ENCODE measurements at regions of chr17 and their contacts with region 1.

Region 1: GRCh38 chr17:72556944-72557826 is 436.4 kb downstream of the SOX9 start:
- DNase-seq: peak; percentile 83 to 93
- ATAC-seq: peak; percentile 51 to 62
- H3K4me3 ChIP-seq: no peak overlapping the region
- H3K27ac ChIP-seq: peak overlapping the region in 1 of 2 experiments; percentile 61; a peak in 3 of 6 replicates
- H3K4me1 ChIP-seq: peaks cover 45% of the 10 kb centered on the region
- CTCF ChIP-seq: peak; percentile 97
- EP300 ChIP-seq: no peak
- POLR2A ChIP-seq: no peak
- RAD21 ChIP-seq: peak; percentile 94

Region 2: GRCh38 chr17:72580321-72581127 is 23.3 kb after region 1 on chr17:
- CTCF ChIA-PET with region 1: interaction called, 334 read pairs
- POLR2A ChIA-PET with region 1: no interaction called
- DNase-seq: peak in 1 of 2 experiments; percentile 50
- ATAC-seq: peak; percentile 42 to 47
- H3K4me3 ChIP-seq: no peak overlapping the region
- H3K27ac ChIP-seq: peak overlapping the region in 1 of 2 experiments; percentile 45; a peak in 3 of 6 replicates
- H3K4me1 ChIP-seq: peaks cover 58% of the 10 kb centered on the region
- CTCF ChIP-seq: no peak
- EP300 ChIP-seq: no peak
- POLR2A ChIP-seq: no peak
- RAD21 ChIP-seq: no peak

Region 3: DNA sequence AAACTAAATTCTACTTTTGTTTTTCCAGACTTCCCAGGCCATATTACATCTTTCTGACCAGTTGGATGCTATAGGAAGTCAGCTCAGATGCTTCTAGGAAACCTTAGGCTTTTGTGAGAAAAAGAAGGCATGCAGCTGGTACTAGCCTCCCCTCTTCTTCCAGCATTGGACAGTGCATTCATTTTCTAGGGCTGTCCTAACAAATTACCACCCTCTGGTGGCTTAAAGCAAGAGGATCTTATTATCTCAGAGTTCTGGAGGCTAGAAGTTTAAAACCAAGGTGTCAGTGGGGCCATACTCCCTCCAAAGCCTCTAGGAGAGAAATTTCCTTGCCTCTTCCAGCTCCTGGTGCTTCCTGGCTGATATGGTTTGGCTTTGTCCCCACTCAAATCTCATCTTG is 67.5 kb after region 1 on chr17:
- CTCF ChIA-PET with region 1: interaction called, 18 read pairs
- POLR2A ChIA-PET with region 1: no interaction called
- DNase-seq: no peak
- ATAC-seq: peak in 1 of 2 experiments; percentile 48; a peak in 2 of 6 replicates
- H3K4me3 ChIP-seq: no peak overlapping the region
- H3K27ac ChIP-seq: peak overlapping the region; percentile 12 to 22; a peak in 3 of 6 replicates
- H3K4me1 ChIP-seq: 0 out of 3 replicates have a peak, but pooled peaks cover 3% of the 10 kb centered on the region
- CTCF ChIP-seq: no peak
- EP300 ChIP-seq: no peak
- POLR2A ChIP-seq: no peak
- RAD21 ChIP-seq: peak; percentile 23; a peak in 2 of 5 replicates

Region 4: GRCh38 chr17:72671016-72671415 is 113.8 kb after region 1 on chr17:
- CTCF ChIA-PET with region 1: interaction called, 22 read pairs
- POLR2A ChIA-PET with region 1: no interaction called
- DNase-seq: no peak
- ATAC-seq: no peak; a peak in 1 of 6 replicates
- H3K4me3 ChIP-seq: no peak overlapping the region
- H3K27ac ChIP-seq: no peak overlapping the region
- H3K4me1 ChIP-seq: no peaks in the 10 kb centered on the region
- CTCF ChIP-seq: no peak
- EP300 ChIP-seq: no peak
- POLR2A ChIP-seq: no peak
- RAD21 ChIP-seq: no peak

Region 5: GRCh38 chr17:72985881-72986720 is 428.9 kb after region 1 on chr17:
- CTCF ChIA-PET with region 1: interaction called, 10 read pairs
- POLR2A ChIA-PET with region 1: no interaction called
- DNase-seq: peak; percentile 79 to 93
- ATAC-seq: peak; percentile 86 to 97
- H3K4me3 ChIP-seq: no peak overlapping the region
- H3K27ac ChIP-seq: no peak overlapping the region
- H3K4me1 ChIP-seq: peaks cover 36% of the 10 kb centered on the region
- CTCF ChIP-seq: peak; percentile 86
- EP300 ChIP-seq: no peak
- POLR2A ChIP-seq: no peak
- RAD21 ChIP-seq: peak; percentile 76 to 77

Region 6: DNA sequence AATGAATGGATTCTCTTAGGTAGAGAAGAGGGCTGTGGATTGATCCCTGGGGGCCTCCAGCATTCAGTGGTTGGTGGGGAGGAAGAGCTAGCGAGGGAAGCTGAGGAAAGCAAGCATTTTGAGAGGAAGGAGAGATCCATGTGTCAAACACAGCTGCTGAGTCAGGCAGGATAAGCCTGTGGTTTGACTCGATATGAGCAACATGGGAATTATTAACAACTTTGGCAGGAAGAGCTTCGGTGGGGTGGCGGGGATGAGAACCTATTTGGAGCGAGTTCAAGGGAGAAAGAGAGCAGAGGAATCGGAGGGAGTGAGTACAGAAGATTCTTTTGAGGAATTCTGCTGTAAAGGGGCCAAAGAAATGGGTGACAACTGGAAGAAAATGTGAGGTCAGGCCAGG is 814.1 kb after region 1 on chr17:
- CTCF ChIA-PET with region 1: interaction called, 15 read pairs
- POLR2A ChIA-PET with region 1: interaction called, 3 read pairs
- DNase-seq: peak in 1 of 2 experiments; percentile 44
- ATAC-seq: no peak
- H3K4me3 ChIP-seq: no peak overlapping the region
- H3K27ac ChIP-seq: no peak overlapping the region
- H3K4me1 ChIP-seq: 0 out of 3 replicates have a peak, but pooled peaks cover 7% of the 10 kb centered on the region
- CTCF ChIP-seq: no peak
- EP300 ChIP-seq: no peak
- POLR2A ChIP-seq: no peak
- RAD21 ChIP-seq: no peak